Psoas muscle (tissue), 8 donors: ENCODE measurements at regions of chr12 and their contacts with region 1.

Region 1: GRCh38 chr12:132807295-132808092 is 21.2 kb downstream of the GOLGA3 start:
- DNase-seq: no peak
- ATAC-seq: peak; percentile 45 to 84 (median 61)
- H3K4me3 ChIP-seq: no peak overlapping the region
- H3K27ac ChIP-seq: no peak overlapping the region
- H3K4me1 ChIP-seq: no peaks in the 10 kb centered on the region
- H3K27me3 ChIP-seq: no peaks in the 10 kb centered on the region
- CTCF ChIP-seq: no peak

Region 2: GRCh38 chr12:132429946-132430643 is 377.4 kb before region 1 on chr12:
- intact Hi-C with region 1: no loop called
- DNase-seq: no peak
- ATAC-seq: peak; percentile 34 to 62 (median 52)
- H3K4me3 ChIP-seq: no peak overlapping the region
- H3K27ac ChIP-seq: no peak overlapping the region
- H3K4me1 ChIP-seq: no peaks in the 10 kb centered on the region
- H3K27me3 ChIP-seq: peaks cover 0 to 89% (median 30%) of the 10 kb centered on the region in 3 donors
- CTCF ChIP-seq: no peak

Region 3: GRCh38 chr12:132771126-132771838 is 36.2 kb before region 1 on chr12:
- intact Hi-C with region 1: loop called in 1 of 2 experiments (anchors 5 kb)
- DNase-seq: no peak
- ATAC-seq: no peak
- H3K4me3 ChIP-seq: no peak overlapping the region
- H3K27ac ChIP-seq: no peak overlapping the region
- H3K4me1 ChIP-seq: peaks cover 14% of the 10 kb centered on the region
- H3K27me3 ChIP-seq: no peaks in the 10 kb centered on the region
- CTCF ChIP-seq: no peak